ENCODE measurements at regions of chr4 and their contacts with region 1.

Region 1: DNA sequence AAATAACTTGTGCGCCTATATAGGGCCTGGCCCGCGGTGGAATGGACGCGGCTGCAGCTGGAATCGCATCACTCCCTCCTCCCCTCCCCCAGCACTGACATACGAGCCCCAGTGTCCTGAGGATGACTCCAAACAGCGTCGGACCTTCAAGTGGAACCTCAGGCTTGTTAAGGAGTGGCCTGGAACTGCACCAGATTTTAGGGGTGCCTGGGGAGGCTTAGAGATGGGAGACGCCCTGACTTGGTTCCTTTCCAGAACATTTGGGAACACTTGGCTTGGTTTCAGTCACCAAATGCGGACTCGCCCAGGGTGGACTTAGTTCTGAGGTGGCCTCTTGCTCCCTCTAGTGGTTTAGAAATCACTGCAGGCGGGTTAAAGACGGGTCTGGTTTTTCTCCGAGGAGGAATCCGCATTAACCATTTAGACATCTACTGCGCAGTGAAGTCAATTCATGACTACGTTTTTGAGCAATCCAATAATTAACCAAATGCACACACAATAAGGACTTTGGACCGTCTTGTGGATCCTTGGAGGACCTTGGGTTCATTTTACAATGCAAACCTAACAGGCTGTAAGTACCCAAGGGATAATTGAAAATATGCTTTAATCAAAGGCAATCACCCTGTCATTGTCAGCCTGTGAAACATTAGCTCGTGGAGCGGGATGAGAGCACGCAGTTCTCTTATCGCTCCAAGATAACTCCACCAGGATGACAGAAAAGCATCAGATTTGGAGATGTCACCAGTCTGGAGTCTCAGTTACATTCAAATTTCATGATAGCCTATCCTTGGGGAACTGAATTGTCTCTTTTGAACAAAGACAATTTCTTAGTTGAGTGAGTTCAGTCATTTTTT is 11.2 kb upstream of the PDGFRA start:
- DNase-seq: peak; percentile 64
- H3K4me3 Mint-ChIP-seq: no peak overlapping the region
- H3K27ac Mint-ChIP-seq: no peak overlapping the region
- H3K4me1 Mint-ChIP-seq: peaks cover 4% of the 10 kb centered on the region
- H3K27me3 Mint-ChIP-seq: peaks cover 37% of the 10 kb centered on the region

Region 2: DNA sequence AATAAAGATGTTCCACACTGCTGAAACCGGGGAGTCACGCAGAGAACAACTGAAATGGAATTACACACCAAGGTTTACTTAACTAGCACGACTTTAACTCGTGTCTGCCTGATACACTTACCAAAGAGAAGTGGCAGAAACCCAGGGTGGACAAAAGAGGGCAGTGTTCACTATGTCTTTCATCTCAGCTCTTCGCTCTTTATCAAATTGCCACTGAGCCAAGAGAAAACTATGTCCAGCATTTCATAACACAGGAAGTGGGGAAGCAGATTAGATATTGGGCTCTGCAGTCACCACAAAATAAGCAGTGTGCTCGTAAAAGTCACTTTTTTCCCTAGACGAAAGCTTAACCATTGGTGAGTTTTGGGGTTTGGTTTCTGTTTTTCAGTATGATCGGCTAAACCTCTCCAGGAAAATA is 309.2 kb before region 1 on chr4:
- CTCF ChIA-PET with region 1: interaction called, 28 read pairs
- DNase-seq: peak; percentile 22
- H3K4me3 Mint-ChIP-seq: no peak overlapping the region
- H3K27ac Mint-ChIP-seq: no peak overlapping the region
- H3K4me1 Mint-ChIP-seq: peaks cover 11% of the 10 kb centered on the region
- H3K27me3 Mint-ChIP-seq: peaks cover 39% of the 10 kb centered on the region

Region 3: DNA sequence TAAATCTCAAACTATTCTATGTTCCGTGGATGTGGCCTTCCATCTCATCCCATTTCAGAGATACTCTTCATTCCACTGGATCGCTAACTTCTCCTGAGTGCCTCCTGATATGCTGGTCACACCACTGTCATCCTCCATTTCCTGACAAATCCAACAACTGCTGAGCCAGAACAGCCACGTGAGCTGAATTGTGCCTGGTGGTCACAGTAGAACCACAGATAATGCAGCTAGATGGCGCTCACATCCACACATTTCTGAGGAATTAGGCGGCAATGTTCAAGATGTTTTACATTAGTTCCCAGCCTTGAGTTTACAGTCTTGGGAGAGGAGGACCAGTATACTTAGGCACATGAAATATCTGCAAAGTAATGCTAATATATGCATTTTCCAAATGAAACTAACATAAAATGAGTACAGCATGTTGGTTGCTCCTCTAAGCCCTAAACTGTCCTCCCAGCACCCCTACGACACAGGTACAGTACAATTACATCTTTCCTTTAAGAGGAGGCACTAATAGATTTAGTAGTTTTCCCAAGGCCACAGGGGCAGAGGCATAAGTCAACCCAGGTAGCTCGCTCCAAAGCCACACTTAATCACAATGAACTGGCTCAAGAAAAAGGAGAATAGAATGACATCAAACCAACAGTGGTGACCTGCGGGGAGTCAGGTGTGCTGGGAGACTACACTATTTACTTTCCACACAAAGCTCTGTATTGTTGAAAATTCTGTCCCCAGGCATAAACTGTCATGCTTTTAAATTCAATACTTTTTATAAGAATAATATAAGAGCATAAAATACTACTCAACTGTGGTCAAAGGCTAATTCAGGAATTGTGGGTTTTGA is 287.7 kb before region 1 on chr4:
- CTCF ChIA-PET with region 1: interaction called, 97 read pairs
- DNase-seq: peak; percentile 69
- H3K4me3 Mint-ChIP-seq: no peak overlapping the region
- H3K27ac Mint-ChIP-seq: no peak overlapping the region
- H3K4me1 Mint-ChIP-seq: no peaks in the 10 kb centered on the region
- H3K27me3 Mint-ChIP-seq: peaks cover 10% of the 10 kb centered on the region

Region 4: DNA sequence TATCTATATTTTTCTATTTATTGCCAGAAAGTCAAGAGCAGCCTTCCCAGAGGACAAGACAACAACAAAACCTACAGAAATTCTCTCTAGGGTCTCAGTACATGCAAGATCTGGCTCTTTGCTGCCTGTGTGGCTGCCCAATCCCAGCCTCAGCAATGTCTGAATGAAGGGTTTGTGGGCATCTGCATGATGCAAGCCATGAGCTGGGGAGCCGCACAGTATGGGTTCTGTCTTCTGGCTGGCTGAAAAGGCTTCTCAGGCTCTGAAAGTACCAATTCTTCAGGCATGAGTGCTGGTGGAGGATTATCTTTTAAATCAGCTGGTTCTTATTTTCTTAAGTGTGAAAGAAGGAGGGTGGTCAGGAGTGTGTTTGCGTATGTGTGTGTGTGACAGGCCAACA is 115.8 kb after region 1 on chr4:
- CTCF ChIA-PET with region 1: no interaction called
- DNase-seq: no peak
- H3K4me3 Mint-ChIP-seq: no peak overlapping the region
- H3K27ac Mint-ChIP-seq: no peak overlapping the region
- H3K4me1 Mint-ChIP-seq: no peaks in the 10 kb centered on the region
- H3K27me3 Mint-ChIP-seq: peaks cover 7% of the 10 kb centered on the region

Region 5: DNA sequence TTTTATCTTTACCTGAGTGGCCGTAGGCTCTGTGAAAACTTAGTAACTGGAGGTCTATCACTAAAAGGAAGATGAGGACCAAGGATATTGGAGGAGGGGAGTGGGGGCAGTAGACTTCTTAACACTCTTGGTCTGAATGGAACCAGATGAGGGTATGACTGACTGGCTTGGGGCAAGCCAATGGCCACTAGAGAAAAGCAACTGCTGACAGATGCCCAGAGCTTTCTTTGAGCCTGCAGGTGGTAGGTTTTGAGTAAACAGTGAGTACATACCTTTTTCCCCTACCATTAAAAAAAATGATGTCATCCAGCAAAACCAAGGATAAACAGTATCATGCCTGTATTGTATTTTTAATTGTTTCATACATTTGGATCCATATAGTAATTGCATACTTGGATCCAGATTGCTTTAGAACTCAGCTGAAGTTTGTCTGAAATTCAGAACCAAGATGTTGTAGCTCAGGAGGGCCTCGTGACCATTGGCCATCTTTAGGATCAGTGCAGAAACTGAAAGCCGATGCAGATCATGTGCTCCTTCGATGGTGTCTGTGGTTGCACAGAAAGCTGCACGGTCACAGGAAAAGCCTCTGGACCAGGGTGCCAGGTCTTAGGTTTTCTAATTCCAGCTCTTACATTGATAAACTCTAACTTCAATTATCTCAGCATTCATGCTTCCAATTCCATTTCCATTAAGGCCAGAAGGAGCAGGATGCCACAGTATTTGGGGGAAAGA is 142.2 kb after region 1 on chr4:
- CTCF ChIA-PET with region 1: no interaction called
- DNase-seq: no peak
- H3K4me3 Mint-ChIP-seq: no peak overlapping the region
- H3K27ac Mint-ChIP-seq: no peak overlapping the region
- H3K4me1 Mint-ChIP-seq: peaks cover 7% of the 10 kb centered on the region
- H3K27me3 Mint-ChIP-seq: peaks cover 5% of the 10 kb centered on the region